Activated T-helper 1 cell treated with anti-CD3 and anti-CD28 coated beads, Interleukin-12 subunit alpha, Interleukin-12 subunit beta, Interleukin-2, Interleukin-4 antibody, amounts not matched to agents 30 ng/mL and 10 ng/mL and 1 ng/mL, durations not matched to agents 14 hours and 24 hours and 36 hours (primary cell): ENCODE measurements at regions of chr2 and their contacts with region 1.

Region 1: GRCh38 chr2:26970244-26970920 is at the start of gene MAPRE3:
- DNase-seq: peak; percentile 78
- H3K4me3 Mint-ChIP-seq: peak within 1 kb of the TSS; percentile 84
- H3K27ac Mint-ChIP-seq: peak within 1 kb of the TSS; percentile 71
- H3K4me1 Mint-ChIP-seq: peaks cover 17% of the 10 kb centered on the region
- H3K27me3 Mint-ChIP-seq: peaks cover 49% of the 10 kb centered on the region
- total RNA-seq, gene MAPRE3: 3.1 and 3.7 TPM in 2 replicates

Region 2: DNA sequence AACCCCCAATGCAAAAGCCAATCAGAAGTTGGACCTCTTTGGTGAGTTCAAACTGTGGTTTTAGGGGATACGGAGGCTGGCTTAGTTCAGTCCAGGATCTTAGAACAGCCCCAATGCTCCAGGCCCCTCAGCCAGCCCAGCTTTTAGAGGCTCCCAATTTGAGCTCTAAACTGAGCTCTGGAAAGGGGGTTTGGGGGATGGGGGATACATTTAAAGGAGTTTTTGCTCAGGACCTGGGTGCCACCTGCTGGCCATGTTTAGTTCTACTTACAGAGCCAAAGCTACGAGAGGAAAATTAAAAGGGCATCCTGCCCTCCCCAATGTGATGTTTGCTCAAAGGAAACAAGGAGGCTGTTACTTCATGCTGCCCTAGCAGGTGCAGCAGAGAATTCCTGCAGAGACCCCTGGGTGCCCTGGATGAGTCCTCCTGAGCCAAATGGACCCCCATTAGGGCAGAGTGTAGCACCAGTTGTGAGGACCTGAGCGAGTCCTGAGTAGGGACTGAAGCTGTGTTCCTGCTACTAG is 46.5 kb after region 1 on chr2:
- intact Hi-C with region 1: loop called (anchors 2 kb)
- DNase-seq: no peak
- H3K4me3 Mint-ChIP-seq: no peak overlapping the region
- H3K27ac Mint-ChIP-seq: no peak overlapping the region
- H3K4me1 Mint-ChIP-seq: no peaks in the 10 kb centered on the region
- H3K27me3 Mint-ChIP-seq: no peaks in the 10 kb centered on the region

Region 3: GRCh38 chr2:27050281-27050995 is 80.1 kb after region 1 on chr2:
- intact Hi-C with region 1: loop called (anchors 1 kb)
- DNase-seq: peak; percentile 88
- H3K4me3 Mint-ChIP-seq: peak overlapping the region; percentile 96
- H3K27ac Mint-ChIP-seq: peak overlapping the region; percentile 99
- H3K4me1 Mint-ChIP-seq: peaks cover 36% of the 10 kb centered on the region
- H3K27me3 Mint-ChIP-seq: peaks cover 7% of the 10 kb centered on the region

Region 4: GRCh38 chr2:27133905-27134780 is 163.8 kb after region 1 on chr2 and contains the start of gene PREB:
- intact Hi-C with region 1: loop called (anchors 1 kb)
- DNase-seq: peak; percentile 99
- H3K4me3 Mint-ChIP-seq: peak within 1 kb of the TSS; percentile 95
- H3K27ac Mint-ChIP-seq: peak within 1 kb of the TSS; percentile 98
- H3K4me1 Mint-ChIP-seq: peaks cover 12% of the 10 kb centered on the region
- H3K27me3 Mint-ChIP-seq: no peaks in the 10 kb centered on the region
- total RNA-seq, gene PREB: 95.9 and 97.1 TPM in 2 replicates

Region 5: DNA sequence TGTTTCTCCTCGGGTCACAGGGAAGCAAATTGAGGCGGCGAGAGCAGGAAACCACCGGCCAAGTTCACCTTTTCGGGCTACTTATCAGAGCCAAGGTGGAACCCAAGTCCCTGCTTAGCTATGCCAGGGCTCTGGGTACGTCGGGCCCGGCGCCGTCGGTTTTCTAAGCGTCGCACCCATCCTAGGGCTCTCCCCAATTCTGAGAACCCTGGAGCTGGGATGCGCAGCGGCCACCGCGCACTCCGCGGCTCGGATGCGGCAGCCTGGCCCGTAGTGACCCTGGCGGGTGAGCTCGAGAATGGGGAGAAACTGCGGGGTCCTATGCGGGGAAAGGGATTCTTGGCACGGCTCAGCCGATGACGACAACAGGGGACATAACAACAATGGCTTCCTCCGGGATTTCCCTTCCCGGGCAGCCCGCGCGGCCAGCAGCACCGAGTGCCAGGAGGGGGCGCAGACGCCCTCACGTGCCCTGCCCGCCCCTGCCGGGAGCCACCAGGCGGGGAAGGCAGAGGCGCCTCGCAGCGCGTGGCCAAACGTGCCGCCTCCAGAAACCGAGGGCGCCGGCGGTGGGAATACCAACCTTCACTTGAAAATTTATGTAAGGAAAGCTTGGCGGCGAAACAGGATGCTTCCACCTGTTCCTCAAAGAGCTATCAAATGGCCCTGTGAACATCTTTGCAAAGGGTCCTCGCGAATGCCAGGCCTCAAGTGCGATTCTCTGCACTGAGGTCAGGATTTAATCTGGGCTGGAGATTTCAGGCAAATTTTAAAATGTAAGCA is 294.6 kb after region 1 on chr2:
- intact Hi-C with region 1: loop called (anchors 2 kb)
- DNase-seq: peak; percentile 32
- H3K4me3 Mint-ChIP-seq: peak overlapping the region; percentile 43
- H3K27ac Mint-ChIP-seq: peak overlapping the region; percentile 7
- H3K4me1 Mint-ChIP-seq: peaks cover 14% of the 10 kb centered on the region
- H3K27me3 Mint-ChIP-seq: peaks cover 44% of the 10 kb centered on the region